ENCODE measurements at regions of chr10 and their contacts with region 1.

Region 1: DNA sequence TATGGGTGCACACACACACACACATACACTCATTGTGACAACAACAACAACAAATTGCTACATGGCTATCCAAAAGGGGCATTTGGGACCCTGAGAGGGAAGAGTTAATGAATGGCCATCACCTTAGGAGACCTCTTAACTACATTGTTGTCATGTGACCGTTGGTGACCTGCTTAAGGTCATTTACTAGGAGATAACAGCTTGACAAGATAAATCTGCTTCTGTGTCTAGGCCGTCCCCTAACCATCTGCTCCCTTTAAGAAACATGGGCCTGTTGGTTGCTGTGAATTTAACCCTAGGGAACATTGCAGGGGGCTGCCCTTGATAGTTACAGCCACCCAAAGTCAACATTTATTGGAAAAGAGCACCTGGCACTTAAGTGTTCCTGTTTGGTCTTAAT is 29.7 kb downstream of the C1QL3 start:
- DNase-seq: no peak
- H3K4me3 ChIP-seq: no peak overlapping the region
- H3K27ac ChIP-seq: no peak overlapping the region
- H3K4me1 ChIP-seq: peaks cover 0 to 3% (median 0%) of the 10 kb centered on the region in 4 experiments; a peak in 1 of 7 replicates
- H3K27me3 ChIP-seq: no peaks in the 10 kb centered on the region
- CTCF ChIP-seq: no peak
- EP300 ChIP-seq: no peak
- POLR2A ChIP-seq: no peak
- RAD21 ChIP-seq: no peak

Region 2: GRCh38 chr10:16481052-16481728 is 10.7 kb before region 1 on chr10:
- CTCF ChIA-PET with region 1: interaction called, 12 read pairs
- POLR2A ChIA-PET with region 1: no interaction called
- DNase-seq: no peak
- H3K4me3 ChIP-seq: no peak overlapping the region
- H3K27ac ChIP-seq: no peak overlapping the region
- H3K4me1 ChIP-seq: no peaks in the 10 kb centered on the region
- H3K27me3 ChIP-seq: peaks cover 0 to 1% (median 0%) of the 10 kb centered on the region in 4 experiments; a peak in 1 of 7 replicates
- CTCF ChIP-seq: no peak
- EP300 ChIP-seq: no peak
- POLR2A ChIP-seq: no peak
- RAD21 ChIP-seq: no peak

Region 3: DNA sequence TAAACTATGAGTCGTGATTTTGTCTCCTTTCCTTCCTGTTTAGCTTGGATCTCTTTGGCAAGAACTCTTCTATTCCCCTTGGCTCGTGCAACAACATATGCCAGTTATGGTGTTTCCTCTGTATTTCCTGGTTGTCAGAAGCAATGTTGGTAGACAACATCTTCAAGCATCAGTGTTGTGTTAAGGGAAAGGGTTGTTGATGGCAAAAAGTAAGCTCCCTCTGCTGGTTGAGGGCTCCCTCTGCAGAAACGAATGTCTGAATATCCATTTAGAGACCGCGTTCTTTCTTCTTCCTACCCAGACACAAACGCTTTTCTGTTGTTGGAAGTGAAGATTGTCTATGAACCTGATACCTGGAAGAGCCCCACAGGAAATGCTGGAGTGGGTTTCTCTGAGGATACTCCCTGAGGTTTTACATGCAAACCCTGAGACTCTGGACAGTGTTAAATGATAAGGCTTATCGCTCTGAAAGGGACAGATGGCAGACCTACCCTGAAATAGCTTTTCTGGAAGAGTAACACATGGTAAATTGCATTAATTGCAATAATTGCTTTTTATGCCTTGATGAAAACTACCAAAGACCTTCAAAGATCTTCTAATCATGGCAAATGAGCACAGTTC is 53.3 kb after region 1 on chr10:
- CTCF ChIA-PET with region 1: no interaction called
- POLR2A ChIA-PET with region 1: no interaction called
- DNase-seq: no peak
- H3K4me3 ChIP-seq: no peak overlapping the region
- H3K27ac ChIP-seq: no peak overlapping the region
- H3K4me1 ChIP-seq: no peaks in the 10 kb centered on the region
- H3K27me3 ChIP-seq: no peaks in the 10 kb centered on the region
- CTCF ChIP-seq: peak in 2 of 3 experiments; percentile 73 to 94; a peak in 3 of 4 replicates
- EP300 ChIP-seq: no peak
- POLR2A ChIP-seq: no peak
- RAD21 ChIP-seq: peak; percentile 78 to 79